Heart right ventricle (tissue), 16 donors: ENCODE measurements at regions of chr7 and their contacts with region 1.

Region 1: GRCh38 chr7:91551377-91552175 is 287.3 kb downstream of the FZD1 start:
- DNase-seq: no peak
- ATAC-seq: no peak
- H3K4me3 ChIP-seq: no peak overlapping the region
- H3K27ac ChIP-seq: no peak overlapping the region
- H3K4me1 ChIP-seq: no peaks in the 10 kb centered on the region
- H3K27me3 ChIP-seq: peaks cover 0 to 4% (median 0%) of the 10 kb centered on the region in 7 donors
- CTCF ChIP-seq: no peak

Region 2: GRCh38 chr7:91383905-91384274 is 167.7 kb before region 1 on chr7:
- intact Hi-C with region 1: no loop called
- DNase-seq: no peak
- ATAC-seq: no peak
- H3K4me3 ChIP-seq: no peak overlapping the region
- H3K27ac ChIP-seq: no peak overlapping the region
- H3K4me1 ChIP-seq: peaks cover 0 to 3% (median 0%) of the 10 kb centered on the region in 9 donors
- H3K27me3 ChIP-seq: no peaks in the 10 kb centered on the region
- CTCF ChIP-seq: no peak

Region 3: GRCh38 chr7:91609525-91609924 is 57.9 kb after region 1 on chr7:
- intact Hi-C with region 1: loop called in 1 of 10 experiments (anchors 2 kb)
- DNase-seq: no peak
- ATAC-seq: no peak
- H3K4me3 ChIP-seq: no peak overlapping the region
- H3K27ac ChIP-seq: no peak overlapping the region
- H3K4me1 ChIP-seq: no peaks in the 10 kb centered on the region
- H3K27me3 ChIP-seq: no peaks in the 10 kb centered on the region
- CTCF ChIP-seq: peak in 1 of 9 donors; percentile 8

Region 4: GRCh38 chr7:91620827-91621226 is 69.3 kb after region 1 on chr7:
- intact Hi-C with region 1: no loop called
- DNase-seq: no peak
- ATAC-seq: no peak
- H3K4me3 ChIP-seq: no peak overlapping the region
- H3K27ac ChIP-seq: no peak overlapping the region
- H3K4me1 ChIP-seq: no peaks in the 10 kb centered on the region
- H3K27me3 ChIP-seq: no peaks in the 10 kb centered on the region
- CTCF ChIP-seq: no peak